GM23248 (cell line): ENCODE measurements at regions of chr9 and their contacts with region 1.

Region 1: GRCh38 chr9:87678650-87679515 is 47.0 kb upstream of the CTSL start:
- DNase-seq: peak; percentile 81
- H3K4me3 ChIP-seq: no peak overlapping the region
- H3K27ac ChIP-seq: no peak overlapping the region
- H3K4me1 ChIP-seq: no peaks in the 10 kb centered on the region
- H3K27me3 ChIP-seq: no peaks in the 10 kb centered on the region

Region 2: GRCh38 chr9:87783180-87783579 is 104.3 kb after region 1 on chr9:
- in situ Hi-C with region 1: no loop called
- DNase-seq: no peak
- H3K4me3 ChIP-seq: no peak overlapping the region
- H3K27ac ChIP-seq: no peak overlapping the region
- H3K4me1 ChIP-seq: no peaks in the 10 kb centered on the region
- H3K27me3 ChIP-seq: no peaks in the 10 kb centered on the region

Region 3: GRCh38 chr9:87812375-87813118 is 133.7 kb after region 1 on chr9:
- in situ Hi-C with region 1: loop called (anchors 10 kb)
- DNase-seq: peak; percentile 88
- H3K4me3 ChIP-seq: peak overlapping the region; percentile 26; the same call in 1 of the 2 replicates
- H3K27ac ChIP-seq: peak overlapping the region; percentile 29
- H3K4me1 ChIP-seq: peaks cover 13% of the 10 kb centered on the region
- H3K27me3 ChIP-seq: no peaks in the 10 kb centered on the region

Region 4: GRCh38 chr9:88041447-88041846 is 362.6 kb after region 1 on chr9:
- in situ Hi-C with region 1: loop called (anchors 10 kb)
- DNase-seq: peak; percentile 48
- H3K4me3 ChIP-seq: no peak overlapping the region
- H3K27ac ChIP-seq: no peak overlapping the region
- H3K4me1 ChIP-seq: no peaks in the 10 kb centered on the region
- H3K27me3 ChIP-seq: no peaks in the 10 kb centered on the region

Region 5: GRCh38 chr9:88197781-88198340 is 519.0 kb after region 1 on chr9:
- in situ Hi-C with region 1: no loop called
- DNase-seq: peak; percentile 74
- H3K4me3 ChIP-seq: peak overlapping the region; percentile 78
- H3K27ac ChIP-seq: peak overlapping the region; percentile 87
- H3K4me1 ChIP-seq: peaks cover 23% of the 10 kb centered on the region
- H3K27me3 ChIP-seq: no peaks in the 10 kb centered on the region